ENCODE measurements at regions of chr12 and their contacts with region 1.

Region 1: GRCh38 chr12:73935817-73936216 is 601.8 kb upstream of the ATXN7L3B start:
- DNase-seq: peak; percentile 57
- ATAC-seq: peak; percentile 78
- H3K4me3 ChIP-seq: no peak overlapping the region
- H3K27ac ChIP-seq: no peak overlapping the region
- H3K4me1 ChIP-seq: no peaks in the 10 kb centered on the region
- H3K27me3 ChIP-seq: no peaks in the 10 kb centered on the region
- CTCF ChIP-seq: peak; percentile 68

Region 2: DNA sequence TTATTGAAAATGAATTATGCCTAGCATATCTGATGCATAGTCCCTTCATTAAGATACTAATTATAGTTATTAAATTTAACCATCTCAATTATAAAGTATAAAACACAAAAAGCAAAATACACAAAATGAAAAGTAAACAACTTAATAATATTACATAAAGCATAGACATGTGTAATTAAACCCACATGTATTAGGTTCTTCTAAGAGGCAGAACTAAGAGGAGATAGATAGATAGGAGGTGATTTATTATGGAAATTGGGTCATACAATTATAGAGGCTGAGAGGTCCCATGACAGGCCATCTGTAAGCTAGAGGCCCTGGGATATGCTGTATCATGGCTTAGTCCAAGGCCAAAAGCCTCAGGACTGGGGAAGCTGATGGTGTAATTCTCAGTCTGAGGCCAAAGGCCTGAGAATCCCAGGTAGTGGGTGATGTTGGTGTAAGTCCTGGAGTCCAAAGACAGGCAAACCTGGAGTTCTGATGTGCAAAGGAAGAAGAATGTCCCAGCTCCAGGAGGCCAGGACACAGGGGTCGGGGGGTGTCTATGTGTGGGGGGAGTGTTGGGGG is 710.4 kb before region 1 on chr12:
- CTCF ChIA-PET with region 1: no interaction called
- POLR2A ChIA-PET with region 1: no interaction called
- intact Hi-C with region 1: no loop called
- DNase-seq: no peak
- ATAC-seq: no peak
- H3K4me3 ChIP-seq: no peak overlapping the region
- H3K27ac ChIP-seq: no peak overlapping the region
- H3K4me1 ChIP-seq: no peaks in the 10 kb centered on the region
- H3K27me3 ChIP-seq: no peaks in the 10 kb centered on the region
- CTCF ChIP-seq: no peak

Region 3: DNA sequence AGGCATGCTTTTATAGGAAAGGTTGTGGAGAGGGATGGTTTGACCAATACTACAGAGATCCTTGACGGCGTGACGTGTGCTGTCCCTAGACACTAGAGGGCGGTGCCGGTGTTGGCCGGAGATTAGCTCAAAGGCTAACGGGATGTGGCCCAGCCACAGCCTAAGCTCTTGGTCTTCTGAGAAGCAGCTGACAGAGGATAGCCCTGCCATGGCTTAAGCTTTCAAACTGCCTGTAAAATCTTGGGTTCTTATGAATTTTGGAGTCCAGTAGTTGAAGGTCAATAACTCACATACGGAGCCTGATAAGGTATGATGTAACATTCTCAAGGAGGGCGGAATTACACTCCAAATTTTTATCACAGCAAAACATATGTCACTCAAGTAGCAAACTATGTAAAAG is 86.1 kb after region 1 on chr12:
- CTCF ChIA-PET with region 1: interaction called, 4 read pairs
- POLR2A ChIA-PET with region 1: no interaction called
- intact Hi-C with region 1: loop called (anchors 5 kb)
- DNase-seq: peak; percentile 84
- ATAC-seq: peak; percentile 100
- H3K4me3 ChIP-seq: no peak overlapping the region
- H3K27ac ChIP-seq: no peak overlapping the region
- H3K4me1 ChIP-seq: no peaks in the 10 kb centered on the region
- H3K27me3 ChIP-seq: no peaks in the 10 kb centered on the region
- CTCF ChIP-seq: peak; percentile 92

Region 4: GRCh38 chr12:74144396-74144795 is 208.6 kb after region 1 on chr12:
- CTCF ChIA-PET with region 1: no interaction called
- POLR2A ChIA-PET with region 1: no interaction called
- intact Hi-C with region 1: no loop called
- DNase-seq: no peak
- ATAC-seq: no peak
- H3K4me3 ChIP-seq: no peak overlapping the region
- H3K27ac ChIP-seq: no peak overlapping the region
- H3K4me1 ChIP-seq: no peaks in the 10 kb centered on the region
- H3K27me3 ChIP-seq: no peaks in the 10 kb centered on the region
- CTCF ChIP-seq: no peak

Region 5: GRCh38 chr12:74193191-74193590 is 257.4 kb after region 1 on chr12:
- CTCF ChIA-PET with region 1: no interaction called
- POLR2A ChIA-PET with region 1: no interaction called
- intact Hi-C with region 1: no loop called
- DNase-seq: no peak
- ATAC-seq: no peak
- H3K4me3 ChIP-seq: no peak overlapping the region
- H3K27ac ChIP-seq: no peak overlapping the region
- H3K4me1 ChIP-seq: no peaks in the 10 kb centered on the region
- H3K27me3 ChIP-seq: no peaks in the 10 kb centered on the region
- CTCF ChIP-seq: no peak